ENCODE measurements at regions of chr17 and their contacts with region 1.

Region 1: DNA sequence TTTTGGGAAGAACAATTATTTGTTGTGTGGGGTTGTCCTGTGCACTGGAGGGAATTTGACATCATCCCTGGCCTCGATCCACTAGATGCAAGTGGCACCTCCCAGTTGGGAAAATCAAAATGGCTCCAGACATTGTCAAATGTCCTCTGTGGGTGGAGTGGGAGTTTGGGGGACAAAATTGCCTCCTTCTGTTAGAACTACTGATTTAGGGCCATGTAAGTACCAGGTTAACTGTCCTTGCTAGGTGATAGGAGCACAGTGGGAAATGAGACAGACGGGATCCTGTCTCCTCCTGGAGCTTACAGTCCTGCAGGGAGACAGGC is 56.8 kb downstream of the ARHGAP23 start:
- DNase-seq: no peak
- ATAC-seq: no peak
- H3K4me3 Mint-ChIP-seq: no peak overlapping the region
- H3K27ac Mint-ChIP-seq: no peak overlapping the region
- H3K4me1 Mint-ChIP-seq: peaks cover 7% of the 10 kb centered on the region
- H3K27me3 Mint-ChIP-seq: no peaks in the 10 kb centered on the region
- CTCF ChIP-seq: no peak

Region 2: DNA sequence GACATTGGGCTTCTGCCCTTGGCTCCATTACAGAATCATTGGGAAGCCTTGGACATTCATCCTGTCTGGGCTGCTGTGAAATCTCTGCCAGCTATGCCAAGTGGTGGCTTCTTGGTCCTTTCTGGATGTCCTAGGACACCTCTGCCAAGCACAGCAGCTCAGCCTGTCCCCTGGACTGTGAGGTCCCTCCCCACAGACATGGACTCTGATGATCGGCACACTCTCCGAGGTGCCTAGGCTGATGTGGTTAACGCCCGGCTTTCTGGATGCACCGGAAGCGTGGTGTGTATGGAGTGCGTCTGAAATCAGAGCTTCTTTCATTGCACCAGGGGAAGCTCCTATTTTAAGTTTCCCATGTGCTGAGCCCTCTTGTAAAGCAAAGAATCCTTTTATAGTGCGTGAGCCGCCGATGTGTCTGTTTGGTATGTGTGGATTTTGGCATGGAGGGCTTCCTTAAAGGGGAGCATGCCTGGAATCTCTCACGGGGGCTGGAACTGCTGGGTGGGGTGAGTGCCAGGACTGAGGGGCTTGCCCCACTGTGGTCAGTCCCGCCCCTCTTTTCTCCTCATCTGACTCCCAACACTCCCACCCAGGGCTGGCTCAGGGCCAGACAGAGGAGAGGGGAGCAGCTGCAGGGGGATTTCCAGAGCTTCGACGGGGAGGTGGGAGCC is 63.8 kb before region 1 on chr17:
- CTCF ChIA-PET with region 1: interaction called, 18 read pairs
- POLR2A ChIA-PET with region 1: no interaction called
- intact Hi-C with region 1: loop called (anchors 5 kb)
- DNase-seq: no peak
- ATAC-seq: no peak
- H3K4me3 Mint-ChIP-seq: no peak overlapping the region
- H3K27ac Mint-ChIP-seq: no peak overlapping the region
- H3K4me1 Mint-ChIP-seq: peaks cover 5% of the 10 kb centered on the region
- H3K27me3 Mint-ChIP-seq: peaks cover 63% of the 10 kb centered on the region
- CTCF ChIP-seq: no peak

Region 3: GRCh38 chr17:38584350-38584925 is 99.3 kb after region 1 on chr17:
- CTCF ChIA-PET with region 1: no interaction called
- POLR2A ChIA-PET with region 1: no interaction called
- intact Hi-C with region 1: loop called (anchors 5 kb)
- DNase-seq: peak; percentile 69
- ATAC-seq: peak; percentile 78
- H3K4me3 Mint-ChIP-seq: no peak overlapping the region
- H3K27ac Mint-ChIP-seq: no peak overlapping the region
- H3K4me1 Mint-ChIP-seq: peaks cover 4% of the 10 kb centered on the region
- H3K27me3 Mint-ChIP-seq: peaks cover 61% of the 10 kb centered on the region
- CTCF ChIP-seq: peak; percentile 99

Measured in activated CD8-positive, alpha-beta T cell treated with anti-CD3 and anti-CD28 coated beads for 36 hours (primary cell).